ENCODE measurements at regions of chr6 and their contacts with region 1.

Region 1: DNA sequence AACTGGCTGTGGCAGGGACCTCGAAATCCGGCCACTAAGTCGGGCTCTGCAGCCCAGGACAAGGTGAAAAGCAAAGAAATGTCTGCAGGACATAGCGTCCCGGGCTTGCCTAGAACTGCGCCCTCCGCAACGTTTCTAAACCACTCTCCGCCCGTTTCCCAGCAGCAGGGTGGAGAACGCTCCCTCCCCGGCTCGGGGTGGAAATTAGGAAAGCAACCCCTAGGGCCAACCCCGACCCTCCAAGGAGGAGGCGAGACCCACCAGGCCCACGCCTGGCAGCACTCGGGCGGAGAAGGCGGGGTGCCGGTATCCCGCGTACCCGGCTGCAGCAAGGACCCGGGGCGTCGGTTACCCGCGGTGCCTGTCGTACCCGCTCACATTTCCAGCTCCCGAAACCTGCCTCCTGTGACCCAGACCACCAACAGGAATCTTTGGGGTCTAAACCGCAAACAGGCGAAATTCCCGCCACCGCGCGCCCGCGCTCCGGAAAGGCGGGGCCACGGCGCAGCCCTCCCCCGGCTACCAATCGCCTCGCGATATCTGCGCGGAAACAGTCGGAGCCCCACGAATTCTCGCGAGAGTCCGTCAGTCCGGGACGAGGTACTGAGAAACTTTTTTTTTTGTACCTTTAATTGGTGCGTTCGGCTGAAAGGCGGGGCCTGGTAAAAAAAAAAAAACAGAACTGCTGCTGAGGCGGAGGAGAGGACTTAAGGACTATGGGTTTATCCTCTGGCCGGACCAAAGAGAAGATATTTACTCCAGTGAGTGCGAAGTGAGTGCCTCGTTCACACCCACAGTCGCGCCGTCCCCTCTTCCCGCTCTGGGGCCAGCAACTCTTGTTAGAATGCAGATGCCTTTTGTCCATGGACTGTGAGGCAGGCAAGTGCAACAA is at the start of gene MMS22L:
- DNase-seq: peak; percentile 96
- ATAC-seq: peak; percentile 98
- H3K4me3 Mint-ChIP-seq: peak within 1 kb of the TSS; percentile 76
- H3K27ac Mint-ChIP-seq: peak within 1 kb of the TSS; percentile 79
- H3K4me1 Mint-ChIP-seq: peaks cover 23% of the 10 kb centered on the region
- H3K27me3 Mint-ChIP-seq: no peaks in the 10 kb centered on the region
- total RNA-seq, gene MMS22L: 33.9 to 43.6 TPM

Region 2: GRCh38 chr6:95577304-95578105 is 1705.5 kb before region 1 on chr6 and contains the start of gene MANEA:
- CTCF ChIA-PET with region 1: no interaction called
- POLR2A ChIA-PET with region 1: no interaction called
- intact Hi-C with region 1: loop called (anchors 2 to 10 kb)
- DNase-seq: peak; percentile 92
- ATAC-seq: peak; percentile 92
- H3K4me3 Mint-ChIP-seq: peak within 1 kb of the TSS; percentile 81
- H3K27ac Mint-ChIP-seq: peak within 1 kb of the TSS; percentile 98
- H3K4me1 Mint-ChIP-seq: peaks cover 31% of the 10 kb centered on the region
- H3K27me3 Mint-ChIP-seq: no peaks in the 10 kb centered on the region
- total RNA-seq, gene MANEA: 19.6 to 22.4 TPM

Region 3: GRCh38 chr6:96101560-96101959 is 1181.4 kb before region 1 on chr6:
- CTCF ChIA-PET with region 1: no interaction called
- POLR2A ChIA-PET with region 1: no interaction called
- intact Hi-C with region 1: no loop called
- DNase-seq: no peak
- ATAC-seq: no peak
- H3K4me3 Mint-ChIP-seq: no peak overlapping the region
- H3K27ac Mint-ChIP-seq: no peak overlapping the region
- H3K4me1 Mint-ChIP-seq: no peaks in the 10 kb centered on the region
- H3K27me3 Mint-ChIP-seq: no peaks in the 10 kb centered on the region

Region 4: DNA sequence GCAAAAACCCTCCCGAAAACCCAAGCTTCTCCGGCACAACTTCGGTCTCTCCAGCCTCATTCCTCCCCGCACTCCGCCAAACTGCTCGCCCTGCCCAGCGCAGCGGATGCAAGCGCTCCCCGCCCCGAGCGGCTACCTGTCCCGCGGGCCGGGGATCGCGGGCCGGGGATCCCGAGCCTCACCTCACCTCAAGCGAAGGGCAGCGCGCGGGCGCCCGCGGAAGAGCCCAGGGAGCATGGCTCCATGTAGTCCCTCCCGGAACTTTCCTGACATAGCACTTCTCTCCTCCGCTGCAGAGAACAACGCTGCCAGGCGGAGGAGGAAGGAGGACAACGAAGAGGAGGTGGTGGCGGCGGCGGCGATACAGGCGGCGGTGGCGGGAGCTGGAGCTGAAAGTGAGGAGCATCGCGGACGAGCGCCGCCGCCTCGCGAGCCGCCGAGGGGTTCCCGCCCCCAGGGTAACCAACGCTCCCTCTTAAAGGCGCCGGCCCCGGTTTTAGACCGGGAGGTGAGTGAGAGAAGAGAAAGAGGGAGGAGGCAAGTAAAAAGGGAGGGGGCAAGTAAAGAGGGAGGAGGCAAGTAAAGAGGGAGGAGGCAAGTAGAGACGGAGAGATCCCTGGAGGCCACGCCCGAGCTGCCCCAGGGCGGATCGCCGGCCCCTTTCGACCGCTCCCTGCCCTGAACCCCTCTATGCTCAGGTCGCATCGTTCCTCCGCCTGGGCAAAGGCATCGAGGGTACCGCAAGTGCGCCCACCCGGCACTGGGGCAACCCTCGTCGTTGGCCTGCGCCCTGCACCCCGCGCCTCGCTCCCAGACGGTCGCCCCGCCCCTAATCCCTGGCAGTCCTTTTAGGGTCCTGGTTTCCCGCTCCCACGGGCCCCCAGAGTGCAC is 445.6 kb before region 1 on chr6 and contains the start of gene GPR63:
- CTCF ChIA-PET with region 1: no interaction called
- POLR2A ChIA-PET with region 1: no interaction called
- intact Hi-C with region 1: loop called in 1 of 2 experiments (anchors 2 kb)
- DNase-seq: peak; percentile 88
- ATAC-seq: peak; percentile 99
- H3K4me3 Mint-ChIP-seq: peak within 1 kb of the TSS; percentile 86
- H3K27ac Mint-ChIP-seq: peak within 1 kb of the TSS; percentile 65
- H3K4me1 Mint-ChIP-seq: peaks cover 17% of the 10 kb centered on the region
- H3K27me3 Mint-ChIP-seq: peaks cover 32% of the 10 kb centered on the region
- total RNA-seq, gene GPR63: 1.2 to 1.3 TPM

Region 5: DNA sequence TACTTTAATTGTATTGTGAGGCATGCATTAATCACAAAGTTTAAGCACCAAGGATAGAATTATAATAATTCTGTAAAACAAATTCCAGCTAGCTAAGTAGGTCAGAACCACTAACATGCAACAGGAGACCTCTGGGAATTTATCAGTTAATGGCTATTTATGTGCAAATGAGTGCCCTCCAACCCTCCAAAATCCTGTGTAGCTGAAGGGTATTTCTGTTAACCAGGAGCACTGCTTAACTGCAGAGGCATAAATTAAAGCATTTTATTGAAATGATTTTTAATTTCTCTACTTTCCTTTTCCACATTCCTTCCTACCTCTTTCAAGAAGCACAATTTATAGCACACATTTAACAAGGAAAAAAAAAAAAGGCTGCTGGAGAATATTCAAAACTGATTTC is 77.0 kb before region 1 on chr6:
- CTCF ChIA-PET with region 1: no interaction called
- POLR2A ChIA-PET with region 1: no interaction called
- intact Hi-C with region 1: no loop called
- DNase-seq: no peak
- ATAC-seq: no peak
- H3K4me3 Mint-ChIP-seq: no peak overlapping the region
- H3K27ac Mint-ChIP-seq: no peak overlapping the region
- H3K4me1 Mint-ChIP-seq: no peaks in the 10 kb centered on the region
- H3K27me3 Mint-ChIP-seq: no peaks in the 10 kb centered on the region

Region 6: DNA sequence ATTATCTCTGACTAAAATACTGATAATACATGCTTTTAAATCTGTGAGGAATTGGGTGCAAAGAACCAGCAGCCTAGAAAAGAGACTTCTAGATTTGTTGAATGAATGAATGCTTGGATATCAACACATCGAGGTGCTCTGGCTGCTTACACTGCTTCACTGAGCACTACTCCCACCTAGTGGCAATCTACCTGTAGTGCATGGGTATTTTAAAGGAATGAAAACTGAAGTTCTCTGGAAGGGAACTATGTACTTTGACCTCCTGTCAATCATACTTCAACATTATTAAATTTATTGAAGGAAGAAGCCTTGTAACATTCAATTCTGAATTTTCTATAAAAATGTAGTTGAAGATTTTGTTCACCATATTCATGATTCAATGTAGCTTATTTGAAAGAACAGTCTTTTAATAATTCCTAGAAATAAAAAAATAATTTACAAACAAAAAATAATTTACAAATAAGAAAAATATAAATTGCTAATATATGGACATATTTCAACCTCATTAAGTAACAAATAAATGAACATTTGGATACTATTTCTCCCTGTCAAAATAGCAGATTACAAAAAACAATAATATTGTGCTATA is 111.3 kb after region 1 on chr6:
- CTCF ChIA-PET with region 1: no interaction called
- POLR2A ChIA-PET with region 1: no interaction called
- intact Hi-C with region 1: loop called in 1 of 2 experiments (anchors 1 kb)
- DNase-seq: peak; percentile 58
- ATAC-seq: peak; percentile 70
- H3K4me3 Mint-ChIP-seq: no peak overlapping the region
- H3K27ac Mint-ChIP-seq: no peak overlapping the region
- H3K4me1 Mint-ChIP-seq: no peaks in the 10 kb centered on the region
- H3K27me3 Mint-ChIP-seq: peaks cover 10% of the 10 kb centered on the region

Region 7: GRCh38 chr6:97423190-97423589 is 140.2 kb after region 1 on chr6:
- CTCF ChIA-PET with region 1: no interaction called
- POLR2A ChIA-PET with region 1: no interaction called
- intact Hi-C with region 1: no loop called
- DNase-seq: no peak
- ATAC-seq: no peak
- H3K4me3 Mint-ChIP-seq: no peak overlapping the region
- H3K27ac Mint-ChIP-seq: no peak overlapping the region
- H3K4me1 Mint-ChIP-seq: no peaks in the 10 kb centered on the region
- H3K27me3 Mint-ChIP-seq: peaks cover 8% of the 10 kb centered on the region

Region 8: GRCh38 chr6:98947351-98948292 is 1664.7 kb after region 1 on chr6 and contains the start of gene FBXL4:
- CTCF ChIA-PET with region 1: no interaction called
- POLR2A ChIA-PET with region 1: no interaction called
- intact Hi-C with region 1: loop called in 1 of 2 experiments (anchors 5 kb)
- DNase-seq: peak; percentile 92
- ATAC-seq: peak; percentile 87
- H3K4me3 Mint-ChIP-seq: peak within 1 kb of the TSS; percentile 93
- H3K27ac Mint-ChIP-seq: peak within 1 kb of the TSS; percentile 97
- H3K4me1 Mint-ChIP-seq: peaks cover 30% of the 10 kb centered on the region
- H3K27me3 Mint-ChIP-seq: no peaks in the 10 kb centered on the region
- total RNA-seq, gene FBXL4: 16.2 to 16.5 TPM

Measured in activated CD4-positive, alpha-beta T cell treated with anti-CD3 and anti-CD28 coated beads for 36 hours (primary cell).